Naive thymus-derived CD4-positive, alpha-beta T cell (primary cell): ENCODE measurements at regions of chr1 and their contacts with region 1.

Region 1: GRCh38 chr1:172638885-172639831 is 19.7 kb upstream of the FASLG start:
- DNase-seq: peak; percentile 12 to 85 (median 79)
- ATAC-seq: peak; percentile 87
- H3K4me3 ChIP-seq: peak overlapping the region; percentile 32
- H3K4me3 Mint-ChIP-seq: peak overlapping the region; percentile 46 to 88 (median 78)
- H3K27ac ChIP-seq: peak overlapping the region; percentile 43
- H3K27ac Mint-ChIP-seq: peak overlapping the region; percentile 88 to 94 (median 91)
- H3K4me1 ChIP-seq: peaks cover 63 to 72% of the 10 kb centered on the region in 2 donors
- H3K4me1 Mint-ChIP-seq: peaks cover 54 to 87% (median 81%) of the 10 kb centered on the region in 7 donors
- H3K27me3 ChIP-seq: no peaks in the 10 kb centered on the region
- H3K27me3 Mint-ChIP-seq: peaks cover 0 to 29% (median 0%) of the 10 kb centered on the region in 5 donors

Region 2: GRCh38 chr1:172699111-172699510 is 60.0 kb after region 1 on chr1:
- CTCF ChIA-PET with region 1: interaction called, 5 read pairs
- POLR2A ChIA-PET with region 1: interaction called, 4 read pairs
- intact Hi-C with region 1: loop called (anchors 1 kb)
- DNase-seq: peak; percentile 13 to 76 (median 65)
- ATAC-seq: peak; percentile 92
- H3K4me3 ChIP-seq: peak overlapping the region; percentile 37
- H3K4me3 Mint-ChIP-seq: peak overlapping the region; percentile 61 to 81 (median 76)
- H3K27ac ChIP-seq: peak overlapping the region; percentile 44
- H3K27ac Mint-ChIP-seq: peak overlapping the region in 7 of 9 donors; percentile 87 to 98 (median 92)
- H3K4me1 ChIP-seq: peaks cover 77 to 80% of the 10 kb centered on the region in 2 donors
- H3K4me1 Mint-ChIP-seq: peaks cover 0 to 53% (median 0%) of the 10 kb centered on the region in 7 donors
- H3K27me3 ChIP-seq: no peaks in the 10 kb centered on the region
- H3K27me3 Mint-ChIP-seq: no peaks in the 10 kb centered on the region

Region 3: GRCh38 chr1:172708452-172708851 is 69.3 kb after region 1 on chr1:
- CTCF ChIA-PET with region 1: interaction called, 5 read pairs
- POLR2A ChIA-PET with region 1: interaction called, 6 read pairs
- intact Hi-C with region 1: loop called (anchors 1 kb)
- DNase-seq: peak in 7 of 9 donors; percentile 43 to 62 (median 53)
- ATAC-seq: peak; percentile 86
- H3K4me3 ChIP-seq: peak overlapping the region; percentile 7
- H3K4me3 Mint-ChIP-seq: peak overlapping the region; percentile 20 to 73 (median 51)
- H3K27ac ChIP-seq: no peak overlapping the region
- H3K27ac Mint-ChIP-seq: peak overlapping the region in 3 of 9 donors; percentile 31 to 71 (median 43)
- H3K4me1 ChIP-seq: peaks cover 35 to 48% of the 10 kb centered on the region in 2 donors
- H3K4me1 Mint-ChIP-seq: peaks cover 10 to 40% (median 27%) of the 10 kb centered on the region in 7 donors
- H3K27me3 ChIP-seq: no peaks in the 10 kb centered on the region
- H3K27me3 Mint-ChIP-seq: peaks cover 0 to 26% (median 0%) of the 10 kb centered on the region in 5 donors